Tibial artery (tissue), 4 donors: ENCODE measurements at regions of chr15 and their contacts with region 1.

Region 1: DNA sequence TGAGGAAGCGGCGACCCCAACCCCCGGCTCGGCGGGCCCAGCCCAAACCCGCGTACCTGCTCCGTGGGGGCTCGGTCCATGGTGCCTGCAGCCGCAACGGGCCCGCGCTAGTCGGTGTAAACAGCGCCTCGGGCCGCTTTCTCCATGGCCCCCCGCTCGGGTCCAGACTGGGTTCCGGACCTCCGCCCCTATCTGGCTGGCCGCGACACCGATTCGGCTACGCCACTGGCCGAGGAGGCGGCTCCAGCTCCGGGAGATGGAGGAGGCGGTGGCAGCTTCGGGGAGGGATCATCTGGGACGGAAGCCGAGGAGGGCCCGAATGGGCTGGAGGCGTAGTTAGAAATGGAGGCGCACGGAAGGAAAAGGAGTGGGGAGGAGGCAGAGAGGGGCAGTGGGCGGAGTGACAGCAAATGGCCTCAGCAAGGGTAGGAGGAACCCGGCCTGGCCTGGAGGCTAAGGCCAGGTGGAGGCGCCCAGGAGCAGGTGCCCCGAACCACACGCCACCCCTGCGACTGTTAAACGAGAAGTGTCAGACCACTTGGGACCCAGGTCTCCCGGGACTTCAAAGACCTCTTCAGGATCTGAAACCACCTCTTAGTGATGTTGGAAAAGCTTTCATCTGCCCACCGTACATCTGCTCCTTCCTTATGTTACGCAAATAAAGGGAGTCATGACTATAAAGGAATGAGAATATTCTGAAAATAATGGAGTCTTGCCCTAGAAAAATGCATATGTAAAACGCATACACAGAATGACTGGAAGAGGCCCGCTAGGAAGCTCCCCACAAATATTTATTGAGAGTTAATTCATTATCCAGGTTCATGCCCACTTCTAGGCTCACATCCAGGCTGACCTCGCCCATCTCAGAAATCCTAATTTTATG is at the start of gene SECISBP2L:
- DNase-seq: peak; percentile 94 to 97
- H3K4me3 ChIP-seq: peak within 1 kb of the TSS; percentile 74 to 100
- H3K27ac ChIP-seq: peak within 1 kb of the TSS; percentile 91 to 92
- H3K4me1 ChIP-seq: peaks cover 0 to 38% (median 9%) of the 10 kb centered on the region in 4 donors
- H3K27me3 ChIP-seq: no peaks in the 10 kb centered on the region
- CTCF ChIP-seq: no peak

Region 2: GRCh38 chr15:47897525-47897924 is 1148.9 kb before region 1 on chr15:
- intact Hi-C with region 1: no loop called
- DNase-seq: no peak
- H3K4me3 ChIP-seq: no peak overlapping the region
- H3K27ac ChIP-seq: no peak overlapping the region
- H3K4me1 ChIP-seq: no peaks in the 10 kb centered on the region
- H3K27me3 ChIP-seq: no peaks in the 10 kb centered on the region
- CTCF ChIP-seq: no peak

Region 3: GRCh38 chr15:48877630-48878595 is 168.5 kb before region 1 on chr15 and contains the start of gene EID1:
- intact Hi-C with region 1: loop called (anchors 5 kb)
- DNase-seq: peak; percentile 93 to 97
- H3K4me3 ChIP-seq: peak within 1 kb of the TSS; percentile 79 to 83
- H3K27ac ChIP-seq: peak within 1 kb of the TSS; percentile 90 to 91
- H3K4me1 ChIP-seq: peaks cover 0 to 22% (median 8%) of the 10 kb centered on the region in 4 donors
- H3K27me3 ChIP-seq: no peaks in the 10 kb centered on the region
- CTCF ChIP-seq: peak in 1 of 2 experiments; percentile 5

Region 4: DNA sequence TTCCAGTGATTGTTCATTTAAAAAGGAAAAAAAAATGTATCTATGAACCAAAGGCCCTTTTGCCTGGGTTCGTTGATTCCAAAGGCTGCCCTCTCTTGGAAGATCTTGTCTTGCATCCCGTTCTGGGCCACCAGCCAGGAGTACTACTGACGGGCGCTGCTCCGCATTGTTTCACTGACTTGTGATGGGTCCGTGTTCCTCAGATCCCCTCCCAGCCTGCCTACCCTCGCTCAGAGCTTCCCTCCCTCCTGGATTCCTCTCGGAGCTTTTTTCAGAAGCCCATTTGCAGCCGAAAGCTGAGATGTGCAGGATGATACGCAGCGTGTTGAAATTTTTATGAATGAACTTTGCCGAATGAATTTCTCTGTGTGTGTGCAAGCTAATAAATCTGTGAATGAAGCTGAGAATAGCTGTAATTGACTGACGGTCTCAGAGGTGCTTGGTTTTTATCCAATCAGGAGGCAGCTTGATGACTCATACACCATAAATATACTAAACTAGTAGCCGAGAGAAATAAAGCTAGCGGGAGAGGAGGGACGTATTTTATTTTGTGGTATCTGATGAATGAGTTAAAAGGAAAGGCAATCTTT is 82.8 kb before region 1 on chr15 and contains the start of gene SHC4:
- intact Hi-C with region 1: loop called (anchors 10 kb)
- DNase-seq: peak; percentile 65 to 75
- H3K4me3 ChIP-seq: peak within 1 kb of the TSS; percentile 60 to 61
- H3K27ac ChIP-seq: peak within 1 kb of the TSS; percentile 43 to 69
- H3K4me1 ChIP-seq: peaks cover 0 to 68% (median 46%) of the 10 kb centered on the region in 4 donors
- H3K27me3 ChIP-seq: no peaks in the 10 kb centered on the region
- CTCF ChIP-seq: no peak